ENCODE measurements at regions of chr3 and their contacts with region 1.

Region 1: DNA sequence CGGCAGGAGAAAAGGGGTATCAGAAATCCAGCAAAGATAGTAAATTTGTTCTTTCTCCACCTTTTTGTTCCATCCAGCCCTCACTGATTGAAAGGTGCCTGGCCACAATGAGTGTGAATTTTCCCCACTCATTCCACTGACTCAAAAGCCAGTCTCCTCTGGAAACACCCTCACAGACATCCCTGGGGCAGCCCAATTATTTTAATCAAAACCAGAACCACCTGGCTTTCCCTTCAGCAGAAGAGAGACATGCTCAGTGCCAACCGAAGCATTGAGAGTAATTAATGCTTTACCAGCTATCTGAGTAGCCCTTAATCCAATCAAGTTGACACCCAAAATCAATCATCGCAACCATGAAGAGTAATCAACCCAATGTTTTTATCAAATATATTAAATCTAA is 1129.6 kb upstream of the GBE1 start:
- DNase-seq: no peak
- H3K4me3 ChIP-seq: no peak overlapping the region
- H3K27ac ChIP-seq: no peak overlapping the region
- H3K4me1 ChIP-seq: no peaks in the 10 kb centered on the region
- H3K27me3 ChIP-seq: no peaks in the 10 kb centered on the region
- CTCF ChIP-seq: no peak

Region 2: DNA sequence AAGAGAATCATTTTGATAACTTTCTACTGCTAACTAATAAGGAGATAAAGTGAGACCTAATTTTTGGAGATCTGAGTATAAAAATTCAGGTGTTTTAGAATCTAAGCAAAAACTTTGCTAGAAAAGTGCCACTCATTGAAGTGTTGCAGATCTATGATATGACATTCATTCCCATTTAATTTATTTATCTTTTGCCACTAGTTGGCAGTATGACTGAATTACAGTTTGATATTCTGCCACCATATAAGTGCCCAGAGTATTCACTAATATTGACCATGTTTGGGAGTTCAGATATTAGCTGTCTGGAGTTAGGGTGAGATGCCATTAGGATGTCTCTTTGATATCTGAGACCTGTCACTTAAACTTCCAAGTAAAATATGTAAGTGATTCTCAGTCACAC is 878.3 kb before region 1 on chr3:
- CTCF ChIA-PET with region 1: no interaction called
- POLR2A ChIA-PET with region 1: interaction called, 12 read pairs
- intact Hi-C with region 1: no loop called
- DNase-seq: no peak
- H3K4me3 ChIP-seq: no peak overlapping the region
- H3K27ac ChIP-seq: no peak overlapping the region
- H3K4me1 ChIP-seq: no peaks in the 10 kb centered on the region
- H3K27me3 ChIP-seq: no peaks in the 10 kb centered on the region
- CTCF ChIP-seq: peak; percentile 46; the same call in 1 of the 2 replicates

Measured in PC-9 (cell line).